Activated naive CD4-positive, alpha-beta T cell treated with anti-CD3 and anti-CD28 coated beads for 36 hours (primary cell): ENCODE measurements at regions of chr2 and their contacts with region 1.

Region 1: GRCh38 chr2:161223139-161223732 is 63.0 kb downstream of the TANK start:
- DNase-seq: peak; percentile 22
- H3K4me3 Mint-ChIP-seq: no peak overlapping the region
- H3K27ac Mint-ChIP-seq: no peak overlapping the region
- H3K4me1 Mint-ChIP-seq: no peaks in the 10 kb centered on the region
- H3K27me3 Mint-ChIP-seq: no peaks in the 10 kb centered on the region

Region 2: GRCh38 chr2:161250864-161251436 is 27.7 kb after region 1 on chr2:
- CTCF ChIA-PET with region 1: interaction called, 3 read pairs
- intact Hi-C with region 1: loop called (anchors 2 kb)
- DNase-seq: peak; percentile 13
- H3K4me3 Mint-ChIP-seq: no peak overlapping the region
- H3K27ac Mint-ChIP-seq: no peak overlapping the region
- H3K4me1 Mint-ChIP-seq: peaks cover 19% of the 10 kb centered on the region
- H3K27me3 Mint-ChIP-seq: no peaks in the 10 kb centered on the region

Region 3: DNA sequence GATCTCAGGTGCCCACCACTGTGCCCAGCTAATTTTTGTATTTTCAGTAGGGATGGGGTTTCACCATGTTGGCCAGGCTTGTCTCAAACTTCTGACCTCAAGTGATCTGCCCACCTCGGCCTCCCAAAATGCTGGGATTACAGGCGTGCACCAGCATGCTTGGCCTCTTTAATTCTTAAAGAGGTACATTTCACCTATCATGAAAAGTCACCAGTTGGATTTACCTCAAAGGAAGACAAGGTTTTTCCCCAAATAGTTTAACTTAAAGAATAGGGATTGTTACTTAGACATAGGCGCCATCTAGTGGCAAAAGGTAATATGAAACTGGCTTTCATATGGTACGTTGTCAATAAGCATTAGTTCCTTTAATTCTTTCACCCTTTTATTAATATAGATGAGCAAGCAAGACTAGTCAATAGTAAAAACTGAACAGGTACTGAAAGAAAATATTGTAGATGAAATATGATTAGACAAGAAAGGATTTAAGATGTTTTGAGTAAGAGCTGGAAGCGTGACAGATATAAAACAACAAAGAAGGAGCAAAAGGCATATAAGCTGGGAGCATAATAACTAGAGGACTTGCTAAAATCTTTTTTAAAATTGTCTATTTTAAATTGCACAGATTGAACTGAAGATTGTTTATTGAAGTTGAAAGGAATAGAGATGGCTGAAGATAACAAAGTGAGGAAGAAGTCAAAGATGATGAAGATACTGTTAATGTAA is 50.0 kb after region 1 on chr2:
- CTCF ChIA-PET with region 1: interaction called, 22 read pairs
- intact Hi-C with region 1: loop called (anchors 1 kb)
- DNase-seq: peak; percentile 37
- H3K4me3 Mint-ChIP-seq: no peak overlapping the region
- H3K27ac Mint-ChIP-seq: no peak overlapping the region
- H3K4me1 Mint-ChIP-seq: peaks cover 3% of the 10 kb centered on the region
- H3K27me3 Mint-ChIP-seq: peaks cover 2% of the 10 kb centered on the region

Region 4: GRCh38 chr2:161426922-161427663 is 203.9 kb after region 1 on chr2:
- CTCF ChIA-PET with region 1: no interaction called
- intact Hi-C with region 1: loop called (anchors 5 kb)
- DNase-seq: peak; percentile 29
- H3K4me3 Mint-ChIP-seq: peak overlapping the region; percentile 56
- H3K27ac Mint-ChIP-seq: peak overlapping the region; percentile 31
- H3K4me1 Mint-ChIP-seq: peaks cover 29% of the 10 kb centered on the region
- H3K27me3 Mint-ChIP-seq: peaks cover 76% of the 10 kb centered on the region

Region 5: GRCh38 chr2:161556440-161556839 is 333.2 kb after region 1 on chr2:
- CTCF ChIA-PET with region 1: no interaction called
- intact Hi-C with region 1: loop called (anchors 5 kb)
- DNase-seq: no peak
- H3K4me3 Mint-ChIP-seq: no peak overlapping the region
- H3K27ac Mint-ChIP-seq: no peak overlapping the region
- H3K4me1 Mint-ChIP-seq: no peaks in the 10 kb centered on the region
- H3K27me3 Mint-ChIP-seq: peaks cover 13% of the 10 kb centered on the region

Region 6: DNA sequence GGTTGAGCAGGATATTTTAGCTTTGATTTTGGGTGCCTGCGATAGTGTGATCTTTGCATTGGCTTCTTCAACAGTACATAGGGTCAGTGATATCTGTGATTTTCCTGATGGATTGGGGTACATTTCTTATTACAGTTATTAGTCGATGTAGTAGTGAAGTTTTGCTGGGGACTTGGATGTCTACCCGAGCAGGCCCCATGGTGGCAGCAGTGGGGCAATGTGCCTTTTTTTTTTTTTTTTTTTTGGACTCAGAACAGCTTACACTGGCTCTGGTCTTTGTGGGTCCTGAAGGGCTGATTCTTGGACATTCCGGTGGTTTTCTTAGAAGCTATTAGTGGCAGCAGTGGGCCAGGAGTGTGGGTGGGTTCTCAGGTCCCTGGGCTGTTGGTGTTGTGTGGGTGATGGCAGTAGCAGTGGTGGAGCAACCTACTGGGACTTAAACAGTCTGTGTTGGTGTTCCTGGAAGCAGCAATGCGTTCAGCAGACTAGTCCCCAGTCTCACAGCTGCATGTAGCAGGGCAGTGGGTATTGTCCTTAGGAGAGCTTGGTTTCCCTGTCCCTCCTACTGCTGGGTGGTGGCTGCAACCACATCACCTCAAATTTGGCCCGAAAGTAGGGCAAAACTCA is 347.3 kb after region 1 on chr2:
- CTCF ChIA-PET with region 1: no interaction called
- intact Hi-C with region 1: loop called (anchors 5 kb)
- DNase-seq: no peak
- H3K4me3 Mint-ChIP-seq: no peak overlapping the region
- H3K27ac Mint-ChIP-seq: no peak overlapping the region
- H3K4me1 Mint-ChIP-seq: peaks cover 18% of the 10 kb centered on the region
- H3K27me3 Mint-ChIP-seq: peaks cover 13% of the 10 kb centered on the region